Heart left ventricle (tissue), 16 donors: ENCODE measurements at regions of chr9 and their contacts with region 1.

Region 1: GRCh38 chr9:90914868-90915483 is 113.4 kb downstream of the SYK start:
- DNase-seq: peak; percentile 61 to 83 (median 72)
- ATAC-seq: peak; percentile 66 to 90 (median 85)
- H3K4me3 ChIP-seq: no peak overlapping the region
- H3K27ac ChIP-seq: no peak overlapping the region
- H3K4me1 ChIP-seq: peaks cover 0 to 4% (median 0%) of the 10 kb centered on the region in 12 donors
- H3K27me3 ChIP-seq: peaks cover 0 to 7% (median 0%) of the 10 kb centered on the region in 9 donors
- CTCF ChIP-seq: peak; percentile 76 to 95 (median 88)
- POLR2A ChIP-seq: no peak

Region 2: GRCh38 chr9:91036826-91037510 is 122.0 kb after region 1 on chr9:
- intact Hi-C with region 1: loop called in 1 of 10 experiments (anchors 5 kb)
- DNase-seq: peak; percentile 76 to 82 (median 78)
- ATAC-seq: peak; percentile 86 to 99 (median 98)
- H3K4me3 ChIP-seq: no peak overlapping the region
- H3K27ac ChIP-seq: no peak overlapping the region
- H3K4me1 ChIP-seq: peaks cover 0 to 20% (median 10%) of the 10 kb centered on the region in 12 donors
- H3K27me3 ChIP-seq: peaks cover 0 to 7% (median 0%) of the 10 kb centered on the region in 9 donors
- CTCF ChIP-seq: peak; percentile 55 to 78 (median 64)
- POLR2A ChIP-seq: no peak

Region 3: DNA sequence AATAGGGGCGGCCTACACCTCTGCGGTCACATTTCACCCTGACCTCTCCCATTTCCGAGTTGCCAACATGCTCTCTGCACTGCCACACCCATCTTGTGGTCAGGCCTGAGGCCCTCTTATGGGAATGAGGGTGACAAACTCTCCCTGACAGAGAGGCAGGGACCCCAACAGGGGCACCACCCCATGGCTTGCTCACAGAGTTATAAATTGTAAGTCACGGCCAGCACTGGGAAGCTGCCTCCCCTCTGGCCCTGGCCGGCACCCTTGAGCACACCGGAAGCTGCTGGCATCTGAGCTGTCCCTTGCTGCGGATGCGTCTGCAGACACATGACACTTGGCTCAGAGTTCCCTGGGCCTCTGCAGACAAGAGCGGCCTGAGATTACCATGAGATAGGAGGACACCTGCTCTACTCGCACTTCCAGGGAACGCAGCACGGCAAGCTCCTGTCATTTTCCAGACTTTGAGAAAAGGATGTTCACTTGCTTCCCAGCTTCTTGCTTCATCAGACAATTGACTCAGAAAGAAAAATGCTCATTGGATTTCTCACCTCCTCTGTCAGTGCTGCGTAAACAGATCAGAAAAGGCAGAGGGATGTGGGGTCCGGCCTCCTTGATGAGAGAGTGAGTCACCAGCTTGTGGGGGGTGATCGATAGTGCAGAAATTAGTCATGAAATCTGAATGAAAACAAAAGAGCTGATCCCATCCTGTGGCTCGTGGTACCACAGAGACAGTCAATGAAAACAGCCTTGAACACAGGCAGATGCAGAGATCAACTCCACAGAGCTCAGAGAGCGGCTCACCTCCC is 156.4 kb after region 1 on chr9:
- intact Hi-C with region 1: no loop called
- DNase-seq: no peak
- ATAC-seq: peak in 1 of 4 donors; percentile 15
- H3K4me3 ChIP-seq: no peak overlapping the region
- H3K27ac ChIP-seq: no peak overlapping the region
- H3K4me1 ChIP-seq: peaks cover 0 to 22% (median 0%) of the 10 kb centered on the region in 12 donors
- H3K27me3 ChIP-seq: no peaks in the 10 kb centered on the region
- CTCF ChIP-seq: no peak
- POLR2A ChIP-seq: no peak

Region 4: GRCh38 chr9:91361291-91362050 is 446.5 kb after region 1 on chr9 and contains the start of gene AUH:
- intact Hi-C with region 1: loop called in 1 of 10 experiments (anchors 10 kb)
- DNase-seq: peak; percentile 87 to 95 (median 88)
- ATAC-seq: peak; percentile 89 to 100 (median 98)
- H3K4me3 ChIP-seq: peak within 1 kb of the TSS; percentile 93 to 100 (median 98)
- H3K27ac ChIP-seq: peak within 1 kb of the TSS; percentile 67 to 97 (median 92)
- H3K4me1 ChIP-seq: peaks cover 0 to 43% (median 28%) of the 10 kb centered on the region in 12 donors
- H3K27me3 ChIP-seq: no peaks in the 10 kb centered on the region
- CTCF ChIP-seq: no peak
- POLR2A ChIP-seq: peak in 1 of 2 donors; percentile 61
- total RNA-seq, gene AUH: 28.5 to 54.7 (median 39.7) TPM

Region 5: DNA sequence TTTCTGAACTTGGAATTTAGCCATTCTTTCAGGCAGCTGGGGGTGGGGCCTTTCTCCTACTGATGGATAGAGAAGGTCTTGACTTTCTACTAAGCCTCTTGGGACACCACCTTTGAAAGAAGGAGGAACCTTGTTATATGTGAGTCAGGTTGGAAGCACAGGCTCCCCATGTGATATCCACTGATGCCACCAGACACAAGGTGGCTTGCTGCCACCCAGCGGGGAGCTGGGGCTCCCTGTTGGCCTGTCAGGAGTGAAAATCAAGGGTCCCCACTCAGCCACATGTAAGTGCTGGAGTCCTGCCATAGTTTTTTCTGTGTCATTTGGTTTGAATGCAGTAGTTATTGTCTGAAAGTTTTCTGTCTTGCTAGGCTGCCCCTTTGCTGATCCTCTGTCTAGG is 761.1 kb after region 1 on chr9:
- intact Hi-C with region 1: loop called in 8 of 10 experiments (anchors 5 to 10 kb)
- DNase-seq: no peak
- ATAC-seq: peak in 1 of 4 donors; percentile 50
- H3K4me3 ChIP-seq: no peak overlapping the region
- H3K27ac ChIP-seq: no peak overlapping the region
- H3K4me1 ChIP-seq: no peaks in the 10 kb centered on the region
- H3K27me3 ChIP-seq: peaks cover 0 to 3% (median 0%) of the 10 kb centered on the region in 9 donors
- CTCF ChIP-seq: peak in 7 of 12 donors; percentile 7 to 37 (median 30)
- POLR2A ChIP-seq: no peak

Region 6: GRCh38 chr9:91727316-91727861 is 812.4 kb after region 1 on chr9:
- intact Hi-C with region 1: loop called in 8 of 10 experiments (anchors 1 to 10 kb)
- DNase-seq: no peak
- ATAC-seq: peak in 3 of 4 donors; percentile 65 to 75 (median 71)
- H3K4me3 ChIP-seq: no peak overlapping the region
- H3K27ac ChIP-seq: peak overlapping the region in 5 of 12 donors; percentile 14 to 65 (median 27)
- H3K4me1 ChIP-seq: peaks cover 0 to 11% (median 0%) of the 10 kb centered on the region in 12 donors
- H3K27me3 ChIP-seq: no peaks in the 10 kb centered on the region
- CTCF ChIP-seq: peak; percentile 38 to 71 (median 64)
- POLR2A ChIP-seq: no peak